ENCODE measurements at regions of chr2 and their contacts with region 1.

Region 1: GRCh38 chr2:83103602-83104001 is 1355.5 kb downstream of the SUCLG1 start:
- DNase-seq: no peak

Region 2: DNA sequence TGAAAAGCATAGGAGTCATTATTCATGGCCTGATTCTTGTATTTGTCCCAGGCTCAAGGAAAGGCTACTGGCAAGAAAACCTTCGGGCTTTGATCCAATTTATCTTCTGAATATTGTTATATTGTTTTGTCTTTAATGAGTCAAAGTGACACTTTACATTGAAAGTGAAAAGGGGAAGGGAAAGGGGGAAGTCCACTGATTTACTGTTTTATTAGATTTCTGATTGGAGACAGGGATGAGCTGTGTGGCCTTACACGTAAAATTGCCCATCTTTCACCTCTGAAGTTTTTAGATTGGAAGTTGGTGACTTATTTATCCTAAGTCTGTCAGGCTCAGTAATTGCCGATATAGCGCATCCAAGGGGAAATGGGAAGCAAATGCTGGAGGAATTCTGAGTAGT is 1955.3 kb before region 1 on chr2:
- intact Hi-C with region 1: loop called in 1 of 2 experiments (anchors 5 kb)
- DNase-seq: no peak